Mammary epithelial cell (primary cell): ENCODE measurements at regions of chr5 and their contacts with region 1.

Region 1: DNA sequence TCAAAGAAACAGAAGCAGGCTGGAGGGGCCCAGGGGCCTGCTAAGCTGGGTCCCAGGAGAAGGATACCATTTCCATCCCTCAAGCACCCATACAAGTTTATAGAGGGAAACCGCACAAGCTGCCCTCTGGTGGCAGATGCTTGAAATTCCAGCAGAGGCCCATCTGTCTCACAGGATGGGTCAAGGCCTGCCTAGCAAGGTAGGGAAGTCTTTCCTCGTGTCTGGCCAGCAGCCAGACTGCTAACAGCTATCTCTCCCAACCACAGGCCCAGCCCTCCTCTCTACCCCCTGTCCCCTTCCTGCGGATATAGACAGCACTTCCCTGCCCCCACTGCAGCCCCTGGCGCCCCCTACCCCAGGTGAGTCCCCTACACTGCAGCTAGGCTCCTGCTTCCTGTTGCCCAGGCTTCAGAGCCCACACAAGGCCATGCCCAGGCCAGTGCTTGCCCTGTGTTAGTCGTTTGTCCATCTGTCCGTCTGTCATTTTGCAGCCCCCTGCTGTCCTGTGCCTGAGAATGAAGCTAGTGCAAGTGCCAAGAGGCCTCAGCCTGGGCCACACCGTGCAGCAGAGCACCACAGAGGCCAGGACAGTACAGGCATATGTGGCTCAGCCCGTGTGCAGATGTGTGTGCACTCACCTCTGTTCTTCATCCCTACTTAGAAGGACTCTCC is 26.2 kb downstream of the TCF7 start:
- DNase-seq: peak; percentile 86
- H3K4me3 ChIP-seq: no peak overlapping the region
- H3K27ac ChIP-seq: no peak overlapping the region
- H3K4me1 ChIP-seq: peaks cover 36% of the 10 kb centered on the region
- H3K27me3 ChIP-seq: no peaks in the 10 kb centered on the region
- CTCF ChIP-seq: peak; percentile 85 to 90

Region 2: GRCh38 chr5:133930061-133930812 is 210.4 kb before region 1 on chr5:
- CTCF ChIA-PET with region 1: no interaction called
- dilution Hi-C with region 1: no loop called
- in situ Hi-C with region 1: no loop called
- intact Hi-C with region 1: no loop called
- DNase-seq: no peak
- H3K4me3 ChIP-seq: no peak overlapping the region
- H3K27ac ChIP-seq: no peak overlapping the region
- H3K4me1 ChIP-seq: no peaks in the 10 kb centered on the region
- H3K27me3 ChIP-seq: no peaks in the 10 kb centered on the region
- CTCF ChIP-seq: no peak

Region 3: GRCh38 chr5:134101686-134102439 is 38.8 kb before region 1 on chr5:
- CTCF ChIA-PET with region 1: no interaction called
- dilution Hi-C with region 1: no loop called
- in situ Hi-C with region 1: no loop called
- intact Hi-C with region 1: loop called (anchors 1 kb)
- DNase-seq: no peak
- H3K4me3 ChIP-seq: no peak overlapping the region
- H3K27ac ChIP-seq: no peak overlapping the region
- H3K4me1 ChIP-seq: peaks cover 9% of the 10 kb centered on the region
- H3K27me3 ChIP-seq: no peaks in the 10 kb centered on the region
- CTCF ChIP-seq: peak; percentile 72 to 93